K562 (cell line): ENCODE measurements at regions of chr6 and their contacts with region 1.

Region 1: GRCh38 chr6:41318654-41319565 is 16.5 kb upstream of the NCR2 start:
- DNase-seq: peak; percentile 87 to 91 (median 88)
- ATAC-seq: peak; percentile 95
- H3K4me3 ChIP-seq: peak overlapping the region; percentile 9; the same call in 1 of the 2 replicates
- H3K27ac ChIP-seq: no peak overlapping the region; the same call in 1 of the 3 replicates
- H3K4me1 ChIP-seq: peaks cover 8 to 21% of the 10 kb centered on the region in 2 experiments; a peak in 4 of 5 replicates
- H3K27me3 ChIP-seq: peaks cover under 1 to 4% of the 10 kb centered on the region in 2 experiments; a peak in 3 of 5 replicates
- CTCF ChIP-seq: peak; percentile 96 to 100 (median 99)
- EP300 ChIP-seq: 0 out of 2 replicates have a peak, but pooled peaks have one; percentile 29
- POLR2A ChIP-seq: no peak
- RAD21 ChIP-seq: peak; percentile 95 to 98

Region 2: GRCh38 chr6:41092421-41093140 is 226.3 kb before region 1 on chr6:
- CTCF ChIA-PET with region 1: no interaction called
- POLR2A ChIA-PET with region 1: no interaction called
- in situ Hi-C with region 1: no loop called
- intact Hi-C with region 1: loop called (anchors 1 kb)
- DNase-seq: peak in 3 of 4 experiments; percentile 20 to 27 (median 23)
- ATAC-seq: peak; percentile 73
- H3K4me3 ChIP-seq: no peak overlapping the region
- H3K27ac ChIP-seq: no peak overlapping the region
- H3K4me1 ChIP-seq: no peaks in the 10 kb centered on the region
- H3K27me3 ChIP-seq: no peaks in the 10 kb centered on the region
- CTCF ChIP-seq: peak; percentile 4 to 48 (median 32); a peak in 2 of 6 replicates
- EP300 ChIP-seq: no peak
- POLR2A ChIP-seq: no peak
- RAD21 ChIP-seq: peak; percentile 44 to 49; a peak in 3 of 4 replicates

Region 3: GRCh38 chr6:41228616-41229015 is 90.3 kb before region 1 on chr6:
- CTCF ChIA-PET with region 1: no interaction called
- POLR2A ChIA-PET with region 1: no interaction called
- in situ Hi-C with region 1: no loop called
- intact Hi-C with region 1: loop called (anchors 2 kb)
- DNase-seq: peak in 2 of 4 experiments; percentile 22 to 30
- ATAC-seq: peak; percentile 88
- H3K4me3 ChIP-seq: no peak overlapping the region
- H3K27ac ChIP-seq: no peak overlapping the region
- H3K4me1 ChIP-seq: no peaks in the 10 kb centered on the region; a peak in 2 of 5 replicates
- H3K27me3 ChIP-seq: peaks cover 10 to 53% of the 10 kb centered on the region in 2 experiments
- CTCF ChIP-seq: peak; percentile 46 to 54 (median 51); a peak in 5 of 6 replicates
- EP300 ChIP-seq: no peak
- POLR2A ChIP-seq: no peak
- RAD21 ChIP-seq: peak; percentile 16 to 29; a peak in 3 of 4 replicates

Region 4: DNA sequence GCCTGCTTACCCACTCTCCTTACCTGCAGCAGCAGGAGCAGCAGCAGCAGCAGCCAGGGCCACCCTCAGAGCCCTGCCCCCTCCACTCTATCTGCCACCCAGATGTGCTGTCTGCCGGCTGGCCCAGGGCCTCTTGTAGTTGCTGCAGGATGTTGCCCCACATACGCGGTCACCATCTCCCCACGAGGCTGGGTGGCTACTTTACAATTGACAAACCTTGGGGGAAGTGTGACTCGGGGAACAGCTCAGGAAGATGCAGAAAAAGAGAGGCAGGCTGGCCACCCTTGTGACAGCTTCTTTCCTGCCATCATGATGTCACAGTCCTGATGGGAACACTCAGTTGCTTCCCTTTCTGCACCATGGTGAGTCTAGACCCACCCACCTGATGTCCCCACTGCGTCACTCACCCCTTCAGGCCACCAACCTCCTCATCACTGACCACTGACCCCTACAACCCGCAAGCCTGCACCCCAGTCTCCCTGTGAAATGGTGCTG is 47.0 kb before region 1 on chr6:
- CTCF ChIA-PET with region 1: no interaction called
- POLR2A ChIA-PET with region 1: no interaction called
- in situ Hi-C with region 1: no loop called
- intact Hi-C with region 1: no loop called
- DNase-seq: no peak
- ATAC-seq: no peak
- H3K4me3 ChIP-seq: no peak overlapping the region
- H3K27ac ChIP-seq: no peak overlapping the region
- H3K4me1 ChIP-seq: no peaks in the 10 kb centered on the region
- H3K27me3 ChIP-seq: peaks cover 28 to 55% of the 10 kb centered on the region in 2 experiments; a peak in 4 of 5 replicates
- CTCF ChIP-seq: no peak
- EP300 ChIP-seq: no peak
- POLR2A ChIP-seq: no peak
- RAD21 ChIP-seq: no peak

Region 5: GRCh38 chr6:41306187-41306854 is 12.6 kb before region 1 on chr6:
- CTCF ChIA-PET with region 1: interaction called, 8 read pairs
- POLR2A ChIA-PET with region 1: interaction called, 3 read pairs
- in situ Hi-C with region 1: no loop called
- intact Hi-C with region 1: loop called (anchors 1 kb)
- DNase-seq: peak; percentile 62 to 76 (median 66)
- ATAC-seq: peak; percentile 89
- H3K4me3 ChIP-seq: no peak overlapping the region
- H3K27ac ChIP-seq: no peak overlapping the region
- H3K4me1 ChIP-seq: no peaks in the 10 kb centered on the region
- H3K27me3 ChIP-seq: peaks cover 15 to 18% of the 10 kb centered on the region in 2 experiments; a peak in 4 of 5 replicates
- CTCF ChIP-seq: peak; percentile 64 to 90 (median 68)
- EP300 ChIP-seq: no peak
- POLR2A ChIP-seq: no peak
- RAD21 ChIP-seq: peak; percentile 64 to 67

Region 6: DNA sequence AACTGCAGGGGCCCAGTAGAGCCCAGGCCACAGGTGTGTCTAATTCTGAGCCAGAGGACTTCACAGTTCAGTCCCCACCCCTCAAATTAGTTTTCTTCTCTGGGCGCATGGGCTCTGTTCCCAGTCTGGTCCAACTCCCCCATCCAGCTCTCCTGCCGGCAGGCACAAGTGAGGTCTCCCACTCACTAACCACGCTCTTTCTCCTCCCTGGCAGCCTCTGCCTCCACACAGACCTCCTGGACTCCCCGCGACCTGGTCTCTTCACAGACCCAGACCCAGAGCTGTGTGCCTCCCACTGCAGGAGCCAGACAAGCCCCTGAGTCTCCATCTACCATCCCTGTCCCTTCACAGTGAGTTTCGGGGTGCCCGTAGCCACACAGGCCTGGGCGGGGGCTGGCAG is 22.7 kb after region 1 on chr6:
- CTCF ChIA-PET with region 1: no interaction called
- POLR2A ChIA-PET with region 1: no interaction called
- in situ Hi-C with region 1: no loop called
- intact Hi-C with region 1: no loop called
- DNase-seq: no peak
- ATAC-seq: peak; percentile 35; the same call in 2 of the 3 replicates
- H3K4me3 ChIP-seq: no peak overlapping the region
- H3K27ac ChIP-seq: no peak overlapping the region
- H3K4me1 ChIP-seq: no peaks in the 10 kb centered on the region
- H3K27me3 ChIP-seq: peaks cover 40 to 71% of the 10 kb centered on the region in 2 experiments
- CTCF ChIP-seq: no peak
- EP300 ChIP-seq: no peak
- POLR2A ChIP-seq: no peak
- RAD21 ChIP-seq: no peak